ENCODE measurements at regions of chr2 and their contacts with region 1.

Region 1: GRCh38 chr2:120546048-120546864 is 189.4 kb upstream of the GLI2 start:
- DNase-seq: peak; percentile 97
- ATAC-seq: peak; percentile 82
- H3K4me3 ChIP-seq: peak overlapping the region; percentile 22 to 53 (median 30)
- H3K27ac ChIP-seq: peak overlapping the region; percentile 83
- H3K4me1 ChIP-seq: peaks cover 100% of the 10 kb centered on the region
- H3K27me3 ChIP-seq: no peaks in the 10 kb centered on the region
- CTCF ChIP-seq: peak; percentile 27; the same call in 1 of the 2 replicates
- EP300 ChIP-seq: peak in 1 of 2 experiments; percentile 80; a peak in 2 of 4 replicates
- POLR2A ChIP-seq: peak; percentile 19 to 46; a peak in 2 of 4 replicates
- RAD21 ChIP-seq: peak; percentile 38; the same call in 1 of the 2 replicates

Region 2: GRCh38 chr2:120323214-120323613 is 223.0 kb before region 1 on chr2:
- CTCF ChIA-PET with region 1: no interaction called
- POLR2A ChIA-PET with region 1: no interaction called
- in situ Hi-C with region 1: no loop called
- intact Hi-C with region 1: no loop called
- DNase-seq: no peak
- ATAC-seq: peak; percentile 29; the same call in 2 of the 3 replicates
- H3K4me3 ChIP-seq: no peak overlapping the region
- H3K27ac ChIP-seq: no peak overlapping the region
- H3K4me1 ChIP-seq: peaks cover 12% of the 10 kb centered on the region; the same call in 1 of the 2 replicates
- H3K27me3 ChIP-seq: peaks cover 24 to 87% of the 10 kb centered on the region in 2 experiments
- CTCF ChIP-seq: no peak
- EP300 ChIP-seq: no peak
- POLR2A ChIP-seq: no peak
- RAD21 ChIP-seq: no peak

Region 3: GRCh38 chr2:120481446-120482194 is 64.6 kb before region 1 on chr2:
- CTCF ChIA-PET with region 1: no interaction called
- POLR2A ChIA-PET with region 1: interaction called, 12 read pairs
- in situ Hi-C with region 1: no loop called
- intact Hi-C with region 1: no loop called
- DNase-seq: peak; percentile 59
- ATAC-seq: peak; percentile 62
- H3K4me3 ChIP-seq: peak overlapping the region in 1 of 3 experiments; percentile 38; a peak in 1 of 6 replicates
- H3K27ac ChIP-seq: no peak overlapping the region
- H3K4me1 ChIP-seq: peaks cover 49% of the 10 kb centered on the region
- H3K27me3 ChIP-seq: no peaks in the 10 kb centered on the region
- CTCF ChIP-seq: peak; percentile 35; the same call in 1 of the 2 replicates
- EP300 ChIP-seq: peak in 1 of 2 experiments; percentile 58; a peak in 1 of 4 replicates
- POLR2A ChIP-seq: no peak
- RAD21 ChIP-seq: no peak

Region 4: GRCh38 chr2:120572226-120572625 is 26.0 kb after region 1 on chr2:
- CTCF ChIA-PET with region 1: no interaction called
- POLR2A ChIA-PET with region 1: no interaction called
- in situ Hi-C with region 1: no loop called
- intact Hi-C with region 1: no loop called
- DNase-seq: no peak
- ATAC-seq: no peak
- H3K4me3 ChIP-seq: no peak overlapping the region
- H3K27ac ChIP-seq: no peak overlapping the region
- H3K4me1 ChIP-seq: peaks cover 15% of the 10 kb centered on the region
- H3K27me3 ChIP-seq: peaks cover 29 to 98% of the 10 kb centered on the region in 2 experiments
- CTCF ChIP-seq: no peak
- EP300 ChIP-seq: no peak
- POLR2A ChIP-seq: no peak
- RAD21 ChIP-seq: no peak